HepG2 (cell line): ENCODE measurements at regions of chr2 and their contacts with region 1.

Region 1: DNA sequence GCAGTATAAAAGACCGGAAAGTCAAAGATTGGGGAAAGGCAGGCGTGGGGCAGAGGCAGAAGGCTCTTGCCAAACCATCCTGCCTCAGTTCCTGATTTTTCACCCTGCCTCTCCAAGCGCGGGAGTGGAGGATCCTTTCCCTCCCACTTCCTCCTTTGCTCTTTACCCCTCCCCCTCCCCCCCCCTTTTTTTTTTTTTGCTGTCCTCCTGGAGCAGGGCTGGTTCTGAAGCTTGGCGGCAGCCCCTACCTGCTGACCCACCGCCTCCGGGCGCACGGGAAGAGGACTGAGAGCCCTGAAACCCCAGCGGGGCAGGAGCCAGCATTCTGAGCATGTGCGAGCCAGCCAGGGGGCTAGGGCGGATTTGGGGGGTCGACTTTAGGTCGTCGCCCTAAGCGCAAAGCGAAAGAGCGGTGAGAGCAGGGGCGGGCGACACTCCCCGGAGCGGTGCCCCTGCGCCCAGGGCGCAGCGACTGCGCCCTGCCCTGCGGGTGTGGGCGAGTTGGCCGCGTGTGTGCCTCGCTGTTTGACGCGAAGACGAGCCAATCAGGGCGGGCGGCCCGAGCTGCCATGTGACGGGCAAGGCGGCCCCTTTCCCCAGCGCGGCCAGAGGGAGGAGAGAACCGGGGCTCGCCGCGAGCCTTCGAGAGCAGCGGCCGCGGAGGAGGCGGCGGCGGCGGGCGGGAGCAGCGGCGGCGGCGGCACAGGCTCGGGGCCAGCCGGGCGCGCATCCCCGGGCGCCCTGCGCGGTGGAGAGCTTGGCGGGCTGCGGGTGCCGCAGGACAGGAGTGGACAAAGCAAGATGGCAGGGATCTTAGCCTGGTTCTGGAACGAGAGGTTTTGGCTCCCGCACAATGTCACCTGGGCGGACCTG is at the start of gene CERS6:
- DNase-seq: peak; percentile 89
- ATAC-seq: peak; percentile 95
- H3K4me3 ChIP-seq: peak within 1 kb of the TSS; percentile 81 to 88 (median 86)
- H3K27ac ChIP-seq: peak within 1 kb of the TSS; percentile 80
- H3K4me1 ChIP-seq: peaks cover 56% of the 10 kb centered on the region
- H3K27me3 ChIP-seq: no peaks in the 10 kb centered on the region; a peak in 1 of 5 replicates
- CTCF ChIP-seq: no peak; the same call in 1 of the 2 replicates
- EP300 ChIP-seq: no peak
- POLR2A ChIP-seq: peak; percentile 77 to 98
- RAD21 ChIP-seq: no peak; the same call in 1 of the 2 replicates
- total RNA-seq, gene CERS6: 17.3 and 20.3 TPM in 2 replicates

Region 2: GRCh38 chr2:168635065-168635577 is 179.2 kb after region 1 on chr2:
- CTCF ChIA-PET with region 1: no interaction called
- POLR2A ChIA-PET with region 1: no interaction called
- in situ Hi-C with region 1: no loop called
- intact Hi-C with region 1: loop called (anchors 1 kb)
- DNase-seq: no peak
- ATAC-seq: peak; percentile 33; the same call in 2 of the 3 replicates
- H3K4me3 ChIP-seq: no peak overlapping the region
- H3K27ac ChIP-seq: no peak overlapping the region
- H3K4me1 ChIP-seq: no peaks in the 10 kb centered on the region
- H3K27me3 ChIP-seq: no peaks in the 10 kb centered on the region
- CTCF ChIP-seq: no peak
- EP300 ChIP-seq: no peak
- POLR2A ChIP-seq: no peak
- RAD21 ChIP-seq: no peak

Region 3: GRCh38 chr2:168705534-168706470 is 249.9 kb after region 1 on chr2:
- CTCF ChIA-PET with region 1: no interaction called
- POLR2A ChIA-PET with region 1: no interaction called
- in situ Hi-C with region 1: no loop called
- intact Hi-C with region 1: loop called (anchors 1 kb)
- DNase-seq: peak; percentile 12
- ATAC-seq: 0 out of 3 replicates have a peak, but pooled peaks have one; percentile 38
- H3K4me3 ChIP-seq: no peak overlapping the region
- H3K27ac ChIP-seq: no peak overlapping the region
- H3K4me1 ChIP-seq: no peaks in the 10 kb centered on the region
- H3K27me3 ChIP-seq: no peaks in the 10 kb centered on the region
- CTCF ChIP-seq: peak; percentile 50
- EP300 ChIP-seq: no peak
- POLR2A ChIP-seq: no peak
- RAD21 ChIP-seq: no peak

Region 4: DNA sequence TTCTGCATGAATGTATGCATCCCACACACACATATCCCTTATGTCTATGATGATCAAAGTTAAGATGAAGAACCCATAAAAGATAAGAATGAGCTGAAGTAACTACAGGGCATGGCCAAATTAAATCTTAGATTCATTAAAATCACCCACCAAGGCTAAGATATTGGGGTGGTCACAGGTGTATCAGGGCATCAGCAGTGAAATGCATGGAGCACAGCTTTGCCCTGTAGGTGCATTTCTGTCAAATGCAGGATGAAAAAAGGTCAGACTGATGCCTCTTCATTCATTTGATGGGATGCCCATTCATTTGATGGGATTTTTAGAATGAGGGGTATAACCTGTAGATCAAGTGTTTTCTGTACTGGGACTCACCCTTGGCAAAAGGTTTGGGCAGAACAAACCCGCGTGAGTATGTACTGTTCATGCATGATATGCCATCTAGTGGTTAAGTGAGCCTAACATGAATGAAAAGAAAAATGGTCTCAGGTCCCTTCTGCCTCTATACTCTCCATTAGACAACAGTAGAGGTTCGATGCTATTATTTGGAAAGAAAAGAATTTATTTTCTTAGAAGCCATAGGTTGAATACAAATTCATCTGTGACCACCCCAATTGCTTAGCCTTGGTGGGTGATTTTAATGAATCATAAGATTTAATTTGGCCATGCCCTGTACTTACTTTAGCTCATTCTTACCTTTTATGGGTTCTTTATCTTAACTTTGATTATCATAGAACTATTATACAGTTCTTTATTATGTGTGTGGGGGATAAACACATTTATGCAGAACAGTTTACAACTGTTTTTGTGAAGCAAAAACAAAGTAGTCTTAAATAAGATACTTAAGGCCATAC is 303.3 kb after region 1 on chr2:
- CTCF ChIA-PET with region 1: no interaction called
- POLR2A ChIA-PET with region 1: no interaction called
- in situ Hi-C with region 1: no loop called
- intact Hi-C with region 1: no loop called
- DNase-seq: peak; percentile 64
- ATAC-seq: peak; percentile 95
- H3K4me3 ChIP-seq: no peak overlapping the region
- H3K27ac ChIP-seq: no peak overlapping the region
- H3K4me1 ChIP-seq: peaks cover 5% of the 10 kb centered on the region; the same call in 1 of the 2 replicates
- H3K27me3 ChIP-seq: no peaks in the 10 kb centered on the region
- CTCF ChIP-seq: peak; percentile 77
- EP300 ChIP-seq: no peak
- POLR2A ChIP-seq: no peak
- RAD21 ChIP-seq: peak; percentile 61; the same call in 1 of the 2 replicates

Region 5: DNA sequence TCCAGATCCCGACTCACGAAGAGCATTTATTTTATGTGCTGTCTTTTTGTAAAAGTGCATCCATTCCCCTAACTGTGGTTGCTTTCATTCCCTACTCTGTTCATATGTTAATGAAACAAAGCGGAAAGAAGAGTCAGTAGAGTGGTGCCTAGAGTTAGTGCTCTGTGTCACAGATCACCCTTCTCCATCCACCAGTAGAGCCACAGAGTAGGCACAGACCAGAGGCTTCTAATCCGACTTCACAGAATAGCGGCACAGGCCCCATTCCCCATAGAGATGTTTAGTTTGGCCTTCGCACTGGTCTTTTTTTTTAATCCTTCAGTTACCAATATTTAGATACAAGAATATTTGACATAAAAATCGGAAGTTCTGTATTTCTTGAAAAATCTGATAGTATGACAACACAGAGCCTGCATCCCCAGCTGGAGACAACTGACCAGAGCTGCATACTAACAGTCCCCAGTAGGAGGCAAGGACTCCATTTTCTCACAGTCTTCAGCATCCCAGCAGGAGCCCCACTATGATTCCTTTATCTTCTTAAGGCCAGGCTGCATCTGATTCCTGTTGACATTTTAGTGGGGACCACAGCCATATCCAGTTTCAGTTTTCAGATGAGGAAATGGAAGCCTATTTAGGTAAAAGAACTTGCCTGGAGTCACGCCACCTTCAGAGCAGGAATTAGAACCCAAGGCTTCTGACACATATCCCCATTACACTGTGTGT is 452.2 kb after region 1 on chr2:
- CTCF ChIA-PET with region 1: no interaction called
- POLR2A ChIA-PET with region 1: no interaction called
- in situ Hi-C with region 1: no loop called
- intact Hi-C with region 1: no loop called
- DNase-seq: no peak
- ATAC-seq: peak; percentile 51
- H3K4me3 ChIP-seq: no peak overlapping the region
- H3K27ac ChIP-seq: no peak overlapping the region
- H3K4me1 ChIP-seq: no peaks in the 10 kb centered on the region
- H3K27me3 ChIP-seq: peaks cover 5 to 53% of the 10 kb centered on the region in 2 experiments
- CTCF ChIP-seq: no peak
- EP300 ChIP-seq: no peak
- POLR2A ChIP-seq: no peak
- RAD21 ChIP-seq: no peak